Lower leg skin (tissue), 4 donors: ENCODE measurements at regions of chr6 and their contacts with region 1.

Region 1: GRCh38 chr6:110506177-110506576 is 29.8 kb upstream of the SLC22A16 start:
- DNase-seq: peak in 1 of 2 donors; percentile 36
- H3K4me3 ChIP-seq: no peak overlapping the region
- CTCF ChIP-seq: no peak
- POLR2A ChIP-seq: no peak

Region 2: DNA sequence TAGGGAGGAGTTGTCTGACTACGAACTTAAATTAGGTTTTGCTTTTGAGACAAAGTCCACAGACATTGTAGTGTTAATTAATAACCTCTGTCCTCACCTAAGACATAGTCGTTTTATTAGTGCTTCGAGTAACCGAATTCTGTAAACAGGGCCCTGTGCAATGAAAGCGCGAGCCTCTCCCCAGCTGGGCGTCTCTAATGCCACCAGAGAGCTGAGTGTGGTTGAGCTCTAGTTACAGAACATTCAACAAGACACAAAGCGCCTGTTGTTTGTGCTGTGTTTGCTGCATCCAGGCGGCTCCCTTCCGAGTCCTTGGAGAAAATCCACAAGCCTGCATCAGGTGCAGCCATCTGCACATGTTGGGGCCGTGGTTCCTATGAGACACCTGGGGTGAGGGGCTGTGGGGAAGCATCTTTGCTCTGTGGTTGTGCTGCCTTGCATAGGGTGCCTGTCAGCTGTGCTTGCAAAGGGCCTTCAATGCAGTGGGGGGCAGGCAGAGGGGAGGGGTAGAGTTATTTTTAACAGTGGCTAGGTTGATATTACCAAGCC is 1187.8 kb before region 1 on chr6:
- intact Hi-C with region 1: no loop called
- DNase-seq: no peak
- H3K4me3 ChIP-seq: no peak overlapping the region
- CTCF ChIP-seq: no peak
- POLR2A ChIP-seq: no peak

Region 3: GRCh38 chr6:110485491-110485890 is 20.7 kb before region 1 on chr6:
- intact Hi-C with region 1: loop called (anchors 1 kb)
- DNase-seq: no peak
- H3K4me3 ChIP-seq: no peak overlapping the region
- CTCF ChIP-seq: no peak
- POLR2A ChIP-seq: no peak